Common myeloid progenitor, CD34-positive (primary cell): ENCODE measurements at regions of chr14 and their contacts with region 1.

Region 1: DNA sequence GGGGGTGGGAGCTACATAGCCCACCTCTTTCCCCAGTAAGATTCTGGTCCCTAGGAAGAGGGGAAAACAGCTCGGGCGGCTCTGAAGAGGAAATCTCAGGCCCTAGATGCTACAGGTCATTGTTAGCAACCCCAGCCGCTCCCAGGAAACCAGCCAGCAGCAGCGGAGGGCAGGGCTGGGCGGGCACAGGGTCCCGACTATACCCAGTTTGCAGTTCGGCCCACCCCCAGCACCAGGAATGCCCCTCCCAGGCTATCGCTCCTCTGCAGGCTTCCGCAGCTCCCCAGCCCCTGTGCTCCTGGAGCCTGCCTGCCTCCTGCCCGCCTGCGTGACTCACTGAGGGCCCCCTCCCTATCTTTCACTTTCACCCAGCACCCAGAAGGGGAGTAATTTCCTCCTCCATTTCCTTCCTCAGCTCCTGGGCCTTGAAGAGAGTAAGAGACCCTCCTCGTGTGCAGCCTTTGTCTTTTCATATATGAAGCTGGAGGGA is 27.2 kb upstream of the PNMA1 start:
- DNase-seq: peak; percentile 96 to 99 (median 97)
- H3K4me3 ChIP-seq: peak overlapping the region in 6 of 7 experiments; percentile 38 to 68 (median 55)
- H3K27ac ChIP-seq: peak overlapping the region; percentile 87 to 99
- H3K4me1 ChIP-seq: peaks cover 23 to 78% (median 77%) of the 10 kb centered on the region in 4 experiments
- H3K27me3 ChIP-seq: no peaks in the 10 kb centered on the region

Region 2: GRCh38 chr14:73728717-73729330 is 12.6 kb before region 1 on chr14:
- CTCF ChIA-PET with region 1: interaction called, 228 read pairs
- POLR2A ChIA-PET with region 1: interaction called, 3 read pairs
- DNase-seq: peak; percentile 77 to 87 (median 78)
- H3K4me3 ChIP-seq: no peak overlapping the region
- H3K27ac ChIP-seq: peak overlapping the region in 1 of 2 experiments; percentile 52
- H3K4me1 ChIP-seq: peaks cover 0 to 33% (median 29%) of the 10 kb centered on the region in 4 experiments
- H3K27me3 ChIP-seq: no peaks in the 10 kb centered on the region

Region 3: GRCh38 chr14:73753959-73754882 is 12.8 kb after region 1 on chr14:
- CTCF ChIA-PET with region 1: interaction called, 225 read pairs
- POLR2A ChIA-PET with region 1: interaction called, 112 read pairs
- DNase-seq: peak; percentile 88 to 97 (median 97)
- H3K4me3 ChIP-seq: peak overlapping the region; percentile 20 to 84 (median 59)
- H3K27ac ChIP-seq: peak overlapping the region; percentile 99
- H3K4me1 ChIP-seq: peaks cover 37 to 98% (median 96%) of the 10 kb centered on the region in 4 experiments
- H3K27me3 ChIP-seq: no peaks in the 10 kb centered on the region

Region 4: DNA sequence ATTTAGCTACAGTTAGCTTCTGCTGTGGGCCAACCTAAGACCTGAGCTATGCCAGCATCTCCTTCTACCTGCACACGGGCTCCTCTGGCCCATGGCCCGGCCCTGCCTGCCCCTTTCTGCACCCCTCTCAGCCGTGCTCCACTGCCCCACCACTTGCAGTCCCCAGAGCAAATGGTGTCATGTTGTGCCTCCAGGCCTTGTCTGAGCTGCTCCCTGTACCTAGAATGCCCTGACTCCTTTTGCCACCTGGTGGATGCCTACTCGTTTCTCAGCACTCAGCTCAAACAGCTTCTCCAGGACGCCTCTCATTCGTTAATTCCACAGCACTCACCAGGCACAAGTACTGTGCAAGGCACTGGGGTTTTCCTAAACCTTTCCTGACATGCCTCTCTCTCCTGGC is 36.0 kb after region 1 on chr14:
- CTCF ChIA-PET with region 1: interaction called, 14 read pairs
- POLR2A ChIA-PET with region 1: interaction called, 6 read pairs
- DNase-seq: peak in 1 of 3 donors; percentile 55
- H3K4me3 ChIP-seq: no peak overlapping the region
- H3K27ac ChIP-seq: no peak overlapping the region
- H3K4me1 ChIP-seq: peaks cover 2 to 38% (median 21%) of the 10 kb centered on the region in 4 experiments
- H3K27me3 ChIP-seq: no peaks in the 10 kb centered on the region

Region 5: GRCh38 chr14:73785873-73786695 is 44.7 kb after region 1 on chr14:
- CTCF ChIA-PET with region 1: interaction called, 10 read pairs
- POLR2A ChIA-PET with region 1: interaction called, 7 read pairs
- DNase-seq: peak; percentile 82 to 93 (median 91)
- H3K4me3 ChIP-seq: peak overlapping the region; percentile 74 to 91 (median 85)
- H3K27ac ChIP-seq: peak overlapping the region; percentile 71 to 94
- H3K4me1 ChIP-seq: peaks cover 30 to 75% (median 51%) of the 10 kb centered on the region in 4 experiments
- H3K27me3 ChIP-seq: no peaks in the 10 kb centered on the region

Region 6: GRCh38 chr14:74595006-74595735 is 853.7 kb after region 1 on chr14:
- CTCF ChIA-PET with region 1: no interaction called
- POLR2A ChIA-PET with region 1: no interaction called
- DNase-seq: no peak
- H3K4me3 ChIP-seq: no peak overlapping the region
- H3K27ac ChIP-seq: no peak overlapping the region
- H3K4me1 ChIP-seq: peaks cover 0 to 6% (median 0%) of the 10 kb centered on the region in 4 experiments
- H3K27me3 ChIP-seq: no peaks in the 10 kb centered on the region